Activated CD8-positive, alpha-beta T cell treated with anti-CD3 and anti-CD28 coated beads for 36 hours (primary cell): ENCODE measurements at regions of chr4 and their contacts with region 1.

Region 1: GRCh38 chr4:47668810-47669408 is 169.0 kb downstream of the CORIN start:
- DNase-seq: peak; percentile 35
- ATAC-seq: peak; percentile 65
- H3K4me3 Mint-ChIP-seq: no peak overlapping the region
- H3K27ac Mint-ChIP-seq: no peak overlapping the region
- H3K4me1 Mint-ChIP-seq: no peaks in the 10 kb centered on the region
- H3K27me3 Mint-ChIP-seq: peaks cover 10% of the 10 kb centered on the region
- CTCF ChIP-seq: peak; percentile 78

Region 2: GRCh38 chr4:47525154-47525819 is 143.6 kb before region 1 on chr4:
- CTCF ChIA-PET with region 1: no interaction called
- POLR2A ChIA-PET with region 1: no interaction called
- intact Hi-C with region 1: no loop called
- DNase-seq: no peak
- ATAC-seq: no peak
- H3K4me3 Mint-ChIP-seq: no peak overlapping the region
- H3K27ac Mint-ChIP-seq: no peak overlapping the region
- H3K4me1 Mint-ChIP-seq: peaks cover 10% of the 10 kb centered on the region
- H3K27me3 Mint-ChIP-seq: no peaks in the 10 kb centered on the region
- CTCF ChIP-seq: no peak

Region 3: GRCh38 chr4:47686294-47686872 is 17.5 kb after region 1 on chr4:
- CTCF ChIA-PET with region 1: interaction called, 12 read pairs
- POLR2A ChIA-PET with region 1: no interaction called
- intact Hi-C with region 1: no loop called
- DNase-seq: peak; percentile 81
- ATAC-seq: peak; percentile 92
- H3K4me3 Mint-ChIP-seq: no peak overlapping the region
- H3K27ac Mint-ChIP-seq: no peak overlapping the region
- H3K4me1 Mint-ChIP-seq: no peaks in the 10 kb centered on the region
- H3K27me3 Mint-ChIP-seq: peaks cover 3% of the 10 kb centered on the region
- CTCF ChIP-seq: peak; percentile 93

Region 4: DNA sequence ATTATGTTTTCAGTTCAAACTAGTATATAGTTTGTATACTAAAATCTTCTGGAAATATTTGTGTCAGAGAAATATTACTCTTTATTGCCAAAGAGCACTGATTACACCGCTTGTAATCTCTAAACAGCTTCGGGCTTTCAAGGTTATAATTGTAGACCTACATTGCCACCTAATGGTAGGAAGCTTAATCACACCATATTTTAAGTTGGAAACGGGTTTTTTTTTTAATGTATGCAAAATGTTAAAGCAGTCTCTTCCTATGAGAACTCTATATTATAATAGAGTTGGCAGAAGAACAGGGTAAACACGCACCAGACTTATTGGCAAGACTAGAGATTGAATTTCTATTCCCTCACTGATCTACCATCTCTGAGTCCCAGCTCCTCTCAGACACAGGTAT is 264.9 kb after region 1 on chr4:
- CTCF ChIA-PET with region 1: interaction called, 17 read pairs
- POLR2A ChIA-PET with region 1: no interaction called
- intact Hi-C with region 1: no loop called
- DNase-seq: no peak
- ATAC-seq: peak; percentile 77
- H3K4me3 Mint-ChIP-seq: no peak overlapping the region
- H3K27ac Mint-ChIP-seq: no peak overlapping the region
- H3K4me1 Mint-ChIP-seq: peaks cover 5% of the 10 kb centered on the region
- H3K27me3 Mint-ChIP-seq: no peaks in the 10 kb centered on the region
- CTCF ChIP-seq: peak; percentile 76

Region 5: DNA sequence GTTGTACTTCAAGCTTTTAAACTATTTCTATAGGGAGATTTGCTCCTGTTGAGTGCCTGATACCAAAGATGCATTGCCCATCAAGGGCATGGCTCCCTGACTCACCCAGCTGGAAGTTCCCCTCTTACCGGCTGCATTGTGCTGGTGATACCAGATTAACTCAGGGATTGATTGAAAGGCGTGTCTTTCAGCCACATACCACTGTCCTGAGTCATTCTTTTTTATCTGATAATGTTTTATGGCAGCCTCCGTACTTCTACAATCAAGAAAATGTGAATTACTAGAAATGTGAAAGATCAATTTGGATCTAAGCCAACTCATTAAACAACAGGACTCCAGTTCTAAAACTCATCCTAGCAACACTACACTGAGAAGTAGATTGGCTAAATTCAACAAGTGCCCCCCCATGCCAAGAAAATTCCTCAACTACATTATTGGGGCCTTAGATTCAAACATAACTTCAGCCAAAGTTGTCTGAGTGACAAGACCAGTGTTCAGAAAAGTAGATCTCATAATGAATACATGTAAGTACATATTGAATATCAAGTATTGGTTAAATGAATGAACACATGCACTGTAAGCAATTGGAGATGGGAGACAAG is 425.1 kb after region 1 on chr4:
- CTCF ChIA-PET with region 1: no interaction called
- POLR2A ChIA-PET with region 1: no interaction called
- intact Hi-C with region 1: no loop called
- DNase-seq: peak; percentile 71
- ATAC-seq: peak; percentile 99
- H3K4me3 Mint-ChIP-seq: no peak overlapping the region
- H3K27ac Mint-ChIP-seq: peak overlapping the region; percentile 65
- H3K4me1 Mint-ChIP-seq: peaks cover 26% of the 10 kb centered on the region
- H3K27me3 Mint-ChIP-seq: no peaks in the 10 kb centered on the region
- CTCF ChIP-seq: no peak